ENCODE measurements at regions of chr7 and their contacts with region 1.

Region 1: DNA sequence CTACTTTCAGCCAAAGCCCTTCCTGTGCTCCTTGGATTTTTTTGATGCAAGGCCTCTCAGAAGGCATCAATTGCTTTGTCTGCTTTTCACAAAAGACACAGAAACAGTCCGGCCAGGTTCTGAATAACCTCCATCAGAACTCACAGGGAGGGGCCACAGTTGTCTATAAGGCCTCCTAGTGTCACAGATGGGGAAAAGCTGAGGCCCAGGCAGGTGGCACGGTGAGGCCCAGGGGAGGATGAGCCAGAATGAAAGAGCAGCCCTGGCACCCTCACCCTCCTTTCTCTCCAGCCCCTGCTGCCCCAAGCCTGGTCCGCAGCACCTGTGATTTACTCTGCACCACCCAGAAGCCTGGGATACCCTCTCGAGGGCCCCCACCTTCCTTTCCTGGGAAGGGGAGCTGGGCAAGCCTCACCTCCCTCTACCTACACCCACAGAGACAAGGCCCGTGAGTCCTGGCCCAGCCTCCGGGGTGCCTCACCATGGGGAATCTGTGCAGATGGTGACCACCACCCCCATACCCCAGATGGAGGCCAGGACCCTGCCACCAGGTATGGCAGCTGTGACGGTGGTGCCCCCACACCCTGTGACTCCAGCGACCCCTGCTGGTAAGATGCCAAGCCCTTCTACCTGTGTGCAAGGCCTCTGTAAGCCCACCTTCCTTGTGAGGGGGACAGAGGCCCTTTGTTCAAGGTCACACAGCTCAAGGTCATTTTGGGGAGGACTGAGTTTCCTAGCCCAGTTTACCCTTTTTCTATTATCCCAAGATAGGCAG is 26.2 kb upstream of the ZNF467 start:
- DNase-seq: peak; percentile 83
- ATAC-seq: peak; percentile 80
- H3K4me3 Mint-ChIP-seq: no peak overlapping the region
- H3K27ac Mint-ChIP-seq: no peak overlapping the region
- H3K4me1 Mint-ChIP-seq: no peaks in the 10 kb centered on the region
- H3K27me3 Mint-ChIP-seq: no peaks in the 10 kb centered on the region
- CTCF ChIP-seq: peak; percentile 67

Region 2: DNA sequence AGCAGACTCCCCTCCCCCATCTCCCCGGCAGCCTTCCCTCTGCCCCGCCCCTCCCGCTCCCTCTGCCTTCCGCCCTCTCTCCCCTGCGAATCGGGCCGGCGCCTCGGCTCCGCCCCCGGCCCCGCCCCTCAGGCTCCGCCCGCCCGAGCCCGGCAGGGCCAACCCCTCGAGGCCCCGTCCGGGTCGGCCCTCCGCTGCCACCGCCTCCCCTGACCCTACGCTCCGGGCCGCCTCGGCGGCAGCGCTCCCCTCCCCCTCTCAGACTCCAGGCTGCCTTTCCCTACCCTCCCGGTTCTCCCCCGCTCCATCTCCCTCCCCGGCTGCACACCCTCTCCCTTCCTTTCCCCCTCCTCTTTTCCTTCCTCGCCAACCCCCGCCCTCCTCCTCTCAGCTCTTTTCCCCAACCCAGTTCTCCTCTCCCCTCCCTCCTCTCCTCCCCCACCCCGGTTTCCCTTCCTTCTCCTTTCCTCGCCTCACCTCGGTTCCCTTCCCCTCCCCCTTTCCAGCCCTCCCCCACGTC is 27.8 kb before region 1 on chr7:
- CTCF ChIA-PET with region 1: interaction called, 14 read pairs
- POLR2A ChIA-PET with region 1: no interaction called
- DNase-seq: peak; percentile 91
- ATAC-seq: peak; percentile 86
- H3K4me3 Mint-ChIP-seq: peak overlapping the region; percentile 68
- H3K27ac Mint-ChIP-seq: no peak overlapping the region
- H3K4me1 Mint-ChIP-seq: peaks cover 15% of the 10 kb centered on the region
- H3K27me3 Mint-ChIP-seq: peaks cover 72% of the 10 kb centered on the region
- CTCF ChIP-seq: no peak

Region 3: DNA sequence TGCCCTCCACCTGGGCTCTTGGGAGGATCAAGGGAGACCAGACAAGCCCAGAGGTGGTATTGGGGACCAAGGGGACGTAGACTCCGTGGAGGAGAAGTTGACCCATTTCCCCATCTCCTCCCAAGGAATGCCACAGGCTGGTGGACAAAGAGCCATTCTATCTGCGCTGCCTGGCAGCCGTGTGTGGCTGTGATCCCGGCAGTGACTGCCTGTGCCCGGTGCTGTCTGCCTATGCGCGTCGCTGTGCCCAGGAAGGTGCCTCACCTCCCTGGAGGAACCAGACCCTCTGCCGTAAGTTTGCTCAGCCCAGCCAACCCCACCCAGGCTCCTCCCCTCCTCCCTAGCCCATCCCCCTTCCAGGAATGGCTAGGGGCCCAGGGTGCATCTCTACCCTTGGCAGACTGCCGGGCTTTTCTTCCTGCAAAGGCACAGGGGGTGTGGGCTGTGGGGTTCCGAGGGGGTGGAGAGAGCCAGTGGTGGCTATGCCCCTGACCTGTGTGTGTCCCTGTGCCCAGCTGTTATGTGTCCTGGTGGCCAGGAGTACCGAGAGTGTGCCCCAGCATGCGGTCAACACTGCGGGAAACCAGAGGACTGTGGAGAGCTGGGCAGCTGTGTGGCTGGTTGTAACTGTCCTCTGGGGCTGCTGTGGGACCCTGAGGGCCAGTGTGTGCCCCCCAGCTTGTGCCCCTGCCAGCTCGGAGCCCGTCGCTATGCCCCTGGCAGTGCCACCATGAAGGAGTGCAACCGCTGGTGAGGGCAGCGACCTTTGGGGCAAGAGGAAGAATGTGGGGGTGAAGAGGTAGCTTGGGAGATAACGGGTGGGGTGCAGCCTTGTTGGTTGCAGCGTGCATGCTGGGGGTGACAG is 16.0 kb before region 1 on chr7:
- CTCF ChIA-PET with region 1: interaction called, 37 read pairs
- POLR2A ChIA-PET with region 1: no interaction called
- DNase-seq: no peak
- ATAC-seq: peak; percentile 64
- H3K4me3 Mint-ChIP-seq: no peak overlapping the region
- H3K27ac Mint-ChIP-seq: no peak overlapping the region
- H3K4me1 Mint-ChIP-seq: 0 out of 2 replicates have a peak, but pooled peaks cover 5% of the 10 kb centered on the region
- H3K27me3 Mint-ChIP-seq: peaks cover 14% of the 10 kb centered on the region
- CTCF ChIP-seq: no peak

Region 4: GRCh38 chr7:149838224-149838947 is 38.8 kb after region 1 on chr7 and contains the start of gene ZNF862:
- CTCF ChIA-PET with region 1: interaction called, 11 read pairs
- POLR2A ChIA-PET with region 1: no interaction called
- DNase-seq: peak; percentile 98
- ATAC-seq: peak; percentile 97
- H3K4me3 Mint-ChIP-seq: peak within 1 kb of the TSS; percentile 78
- H3K27ac Mint-ChIP-seq: peak within 1 kb of the TSS; percentile 77; the same call in 1 of the 2 replicates
- H3K4me1 Mint-ChIP-seq: peaks cover 13% of the 10 kb centered on the region
- H3K27me3 Mint-ChIP-seq: peaks cover 27% of the 10 kb centered on the region
- CTCF ChIP-seq: no peak
- total RNA-seq, gene ZNF862: 3.6 to 6.3 TPM (median 5.8 TPM) in 3 replicates